GM10248 (cell line): ENCODE measurements at regions of chr1 and their contacts with region 1.

Region 1: GRCh38 chr1:185170291-185170848 is 13.4 kb downstream of the SWT1 start:
- DNase-seq: peak; percentile 68
- CTCF ChIP-seq: peak; percentile 69

Region 2: DNA sequence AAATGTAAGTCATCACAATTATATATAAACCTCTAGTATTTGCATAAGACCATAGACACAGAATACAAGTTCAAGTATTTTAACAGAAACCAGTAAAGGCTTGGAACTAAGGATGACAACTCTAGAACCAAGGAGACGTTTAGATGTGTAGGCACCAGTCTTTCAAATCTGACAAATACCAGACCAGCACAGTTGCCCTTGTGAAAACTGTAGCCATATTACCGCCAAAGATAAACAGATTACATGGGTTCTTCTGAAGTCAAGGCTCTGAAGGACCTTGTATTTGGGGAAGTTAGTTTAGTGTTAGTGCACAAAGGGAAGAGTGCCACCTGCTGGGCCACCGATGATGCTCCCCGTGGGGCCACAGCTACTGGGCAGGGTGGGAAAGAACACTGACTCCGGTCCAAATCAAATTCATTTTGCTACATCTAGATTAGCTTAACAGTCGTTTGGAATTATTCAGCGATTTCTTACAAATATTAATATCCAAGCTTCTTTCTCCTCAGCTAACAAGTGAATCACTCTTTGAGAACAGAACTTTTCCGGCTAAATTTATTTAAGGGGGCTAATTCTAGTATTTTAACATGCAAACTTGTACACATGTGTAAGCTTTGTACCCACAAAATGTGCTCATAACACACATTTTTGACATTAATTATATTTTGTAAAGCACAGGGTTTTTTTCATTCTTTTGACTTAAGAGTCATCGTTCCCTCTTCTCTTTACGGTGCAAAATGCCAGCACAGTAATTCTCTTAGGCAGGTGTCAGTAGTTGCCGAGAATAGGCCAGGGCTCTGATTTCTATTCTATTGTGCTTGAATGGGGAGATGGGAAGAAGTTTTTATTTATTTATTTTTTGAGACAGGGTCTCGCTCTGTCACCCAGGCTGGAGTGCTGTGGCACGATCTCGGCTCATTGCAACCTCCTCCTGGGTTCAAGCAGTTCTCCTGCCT is 188.1 kb before region 1 on chr1:
- CTCF ChIA-PET with region 1: interaction called, 20 read pairs
- POLR2A ChIA-PET with region 1: no interaction called
- DNase-seq: peak; percentile 73
- CTCF ChIP-seq: peak; percentile 94

Region 3: GRCh38 chr1:185044981-185045813 is 125.2 kb before region 1 on chr1 and contains the start of gene RNF2:
- CTCF ChIA-PET with region 1: interaction called, 17 read pairs
- POLR2A ChIA-PET with region 1: no interaction called
- DNase-seq: peak; percentile 90
- CTCF ChIP-seq: peak; percentile 8

Region 4: DNA sequence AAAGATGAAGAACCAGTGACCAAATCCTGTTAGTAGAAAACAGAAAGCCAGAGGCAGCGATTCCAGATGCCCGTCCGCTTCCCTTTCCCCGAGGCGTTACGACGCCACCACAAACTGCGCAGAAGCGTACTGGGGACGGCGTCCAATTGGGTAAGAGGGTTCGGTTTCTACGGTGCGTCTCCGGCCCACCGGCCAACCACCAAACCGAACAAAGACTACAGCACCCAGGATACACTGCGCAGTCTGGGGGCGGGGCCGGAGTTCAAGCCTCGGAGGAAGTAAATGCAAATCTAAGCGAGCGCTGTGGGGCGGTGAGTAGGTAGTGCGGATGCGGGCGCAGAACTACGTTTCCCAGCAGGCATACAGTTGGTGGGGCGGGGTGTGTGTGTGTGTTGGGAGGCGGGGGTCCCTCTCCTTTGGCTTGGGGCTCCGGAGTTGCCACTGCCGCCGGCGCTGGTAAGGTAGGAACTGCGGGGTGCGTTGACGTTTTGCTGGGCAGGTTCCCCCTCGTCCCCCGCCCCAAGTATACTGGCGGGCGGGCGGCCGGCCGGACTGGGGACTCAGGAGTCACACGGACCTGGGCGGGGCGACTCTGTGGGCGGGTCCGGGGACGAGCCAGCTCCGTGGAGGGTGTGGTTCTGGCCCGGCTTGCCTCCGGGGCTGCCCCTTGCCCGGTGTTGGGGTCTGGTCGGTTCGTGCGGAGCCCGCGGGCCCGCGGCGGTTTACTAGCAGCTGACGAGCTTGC is 13.3 kb before region 1 on chr1 and contains the starts of genes SWT1 and TRMT1L:
- CTCF ChIA-PET with region 1: interaction called, 66 read pairs
- POLR2A ChIA-PET with region 1: no interaction called
- DNase-seq: peak; percentile 94
- CTCF ChIP-seq: no peak

Region 5: GRCh38 chr1:185200889-185201288 is 30.5 kb after region 1 on chr1:
- CTCF ChIA-PET with region 1: interaction called, 12 read pairs
- POLR2A ChIA-PET with region 1: no interaction called
- DNase-seq: no peak
- CTCF ChIP-seq: no peak

Region 6: GRCh38 chr1:185267301-185267700 is 96.9 kb after region 1 on chr1:
- CTCF ChIA-PET with region 1: no interaction called
- POLR2A ChIA-PET with region 1: no interaction called
- DNase-seq: no peak
- CTCF ChIP-seq: no peak

Region 7: GRCh38 chr1:185670187-185670627 is 499.8 kb after region 1 on chr1:
- CTCF ChIA-PET with region 1: interaction called, 10 read pairs
- POLR2A ChIA-PET with region 1: no interaction called
- DNase-seq: no peak
- CTCF ChIP-seq: no peak